ENCODE measurements at regions of chr22 and their contacts with region 1.

Region 1: DNA sequence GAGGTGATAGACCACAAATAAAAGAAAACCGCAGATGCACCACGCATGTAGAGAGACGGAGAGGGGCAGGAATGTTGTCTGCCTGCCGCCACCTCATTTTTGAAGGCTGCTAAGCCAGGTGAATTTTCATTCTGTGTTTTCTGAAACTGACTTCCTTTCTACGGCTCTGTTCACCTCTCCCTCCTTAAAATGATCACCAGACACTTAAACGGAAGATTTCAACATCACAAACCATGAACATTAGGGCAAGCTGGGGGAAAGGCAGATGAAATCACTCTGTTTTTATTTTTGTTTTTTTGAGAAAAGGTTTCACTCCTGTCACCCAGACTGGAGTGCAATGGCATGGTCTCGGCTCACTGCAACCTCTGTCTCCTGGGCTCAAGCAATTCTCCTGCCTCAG is 232.4 kb downstream of the MIAT start:
- DNase-seq: peak; percentile 40

Region 2: GRCh38 chr22:26722159-26722558 is 167.6 kb before region 1 on chr22:
- intact Hi-C with region 1: no loop called
- DNase-seq: no peak

Region 3: DNA sequence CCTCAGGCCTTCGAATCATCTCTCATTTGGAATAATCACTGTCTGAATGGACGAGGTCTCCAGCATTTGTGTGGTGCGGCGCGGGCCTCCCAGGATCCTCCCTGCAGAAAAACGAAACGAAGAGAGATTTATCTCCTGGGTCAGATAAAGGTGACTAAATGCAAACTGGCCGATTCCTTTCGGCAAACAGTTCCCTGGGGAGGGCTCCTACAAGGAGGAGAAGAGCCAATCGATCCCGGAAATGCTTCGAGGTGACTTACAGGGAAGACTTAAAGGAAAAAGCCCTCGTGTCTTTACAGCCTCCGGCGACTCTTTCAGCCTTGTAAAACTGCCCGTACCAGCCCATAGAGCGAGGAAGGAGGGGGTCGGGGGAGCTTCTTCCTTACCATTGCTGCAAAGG is 105.9 kb before region 1 on chr22:
- intact Hi-C with region 1: no loop called
- DNase-seq: no peak

Region 4: DNA sequence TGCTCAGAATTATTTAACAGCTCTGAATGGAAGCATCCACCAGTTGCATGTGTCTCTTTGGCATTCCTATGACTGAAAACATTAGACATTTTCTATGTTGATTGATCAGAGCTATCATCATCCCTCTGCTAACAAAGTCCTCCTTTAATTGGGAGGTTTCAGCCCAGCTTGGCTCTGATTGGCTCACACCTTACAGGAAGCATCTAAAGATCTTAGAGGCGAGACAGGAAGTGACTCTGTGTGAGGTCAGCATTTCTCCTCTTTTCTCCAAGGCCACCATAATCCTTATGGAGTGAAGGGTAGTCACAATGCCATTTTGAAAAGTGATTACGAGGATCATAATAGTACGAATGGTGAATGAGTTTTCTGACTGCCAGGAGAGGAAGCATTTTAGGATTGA is 28.4 kb after region 1 on chr22:
- intact Hi-C with region 1: loop called in 1 of 2 experiments (anchors 1 kb)
- DNase-seq: no peak

Measured in posterior vena cava (tissue), 2 donors.